SK-N-SH (cell line): ENCODE measurements at regions of chr15 and their contacts with region 1.

Region 1: GRCh38 chr15:98311566-98312188 is 336.7 kb upstream of the IGF1R start:
- DNase-seq: peak; percentile 57
- H3K4me3 ChIP-seq: no peak overlapping the region
- H3K27ac ChIP-seq: no peak overlapping the region
- H3K4me1 ChIP-seq: no peaks in the 10 kb centered on the region
- H3K27me3 ChIP-seq: peaks cover 5% of the 10 kb centered on the region; the same call in 1 of the 2 replicates
- CTCF ChIP-seq: peak; percentile 89
- EP300 ChIP-seq: no peak
- RAD21 ChIP-seq: peak; percentile 65

Region 2: GRCh38 chr15:98324341-98324970 is 12.8 kb after region 1 on chr15:
- CTCF ChIA-PET with region 1: interaction called, 13 read pairs
- POLR2A ChIA-PET with region 1: no interaction called
- DNase-seq: no peak
- H3K4me3 ChIP-seq: no peak overlapping the region
- H3K27ac ChIP-seq: no peak overlapping the region
- H3K4me1 ChIP-seq: no peaks in the 10 kb centered on the region
- H3K27me3 ChIP-seq: peaks cover 5% of the 10 kb centered on the region; the same call in 1 of the 2 replicates
- CTCF ChIP-seq: no peak
- EP300 ChIP-seq: no peak
- RAD21 ChIP-seq: no peak

Region 3: DNA sequence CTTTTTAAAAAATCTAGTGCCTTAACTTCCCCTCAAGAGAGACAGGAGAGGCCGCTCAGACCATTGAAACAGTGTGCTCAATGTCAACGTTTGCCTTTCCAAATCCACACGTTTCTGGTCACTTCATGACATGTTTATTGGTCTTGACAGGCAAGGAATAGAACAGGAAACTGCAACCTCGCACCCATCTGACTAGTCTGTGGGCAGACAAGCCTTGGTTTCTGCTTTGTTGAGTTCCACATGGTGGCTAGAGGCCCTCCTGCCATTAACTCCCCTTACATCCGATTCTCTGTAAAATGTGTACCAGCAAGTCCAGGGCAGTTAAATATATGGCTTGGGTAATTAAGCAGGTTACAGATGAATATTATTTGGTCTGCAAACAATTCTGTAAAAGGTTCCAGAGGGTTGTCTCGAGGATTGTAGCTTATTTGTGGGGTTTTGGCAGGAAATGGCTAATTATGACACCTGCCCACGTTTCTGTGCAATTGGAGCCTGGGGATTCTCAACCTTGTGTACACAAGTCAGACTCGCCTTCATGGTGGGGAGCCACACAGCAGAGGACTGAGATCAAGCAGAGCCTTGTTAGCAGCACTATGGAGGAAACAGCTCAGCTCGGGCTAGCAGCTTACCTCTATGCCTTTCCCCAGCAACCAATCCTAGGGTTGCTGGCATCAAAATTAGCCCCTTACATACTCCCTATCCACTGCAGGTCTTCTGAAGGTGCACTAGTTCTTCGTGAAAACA is 19.2 kb after region 1 on chr15:
- CTCF ChIA-PET with region 1: interaction called, 14 read pairs
- POLR2A ChIA-PET with region 1: no interaction called
- DNase-seq: no peak
- H3K4me3 ChIP-seq: no peak overlapping the region
- H3K27ac ChIP-seq: no peak overlapping the region
- H3K4me1 ChIP-seq: no peaks in the 10 kb centered on the region
- H3K27me3 ChIP-seq: peaks cover 17% of the 10 kb centered on the region; the same call in 1 of the 2 replicates
- CTCF ChIP-seq: no peak
- EP300 ChIP-seq: no peak
- RAD21 ChIP-seq: no peak

Region 4: DNA sequence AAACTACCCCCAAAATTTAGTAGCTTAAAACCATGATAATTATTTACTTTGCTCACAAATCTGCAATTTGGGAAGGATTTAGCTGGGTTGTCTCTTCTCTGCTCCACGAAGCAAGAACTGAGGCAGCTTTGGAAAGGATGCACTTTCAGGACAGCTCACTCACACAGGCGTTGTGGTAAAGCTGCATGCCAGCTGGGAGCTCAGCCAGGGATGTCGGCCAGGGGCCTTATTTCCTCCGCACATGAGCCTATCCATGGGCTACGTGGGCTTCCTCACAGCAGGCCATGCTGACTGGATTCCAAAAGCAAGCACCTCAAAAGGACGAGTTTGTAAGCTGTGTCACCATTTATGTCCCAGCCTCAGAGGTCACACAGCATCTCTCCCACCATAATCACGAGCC is 35.3 kb after region 1 on chr15:
- CTCF ChIA-PET with region 1: interaction called, 11 read pairs
- POLR2A ChIA-PET with region 1: no interaction called
- DNase-seq: no peak
- H3K4me3 ChIP-seq: no peak overlapping the region
- H3K27ac ChIP-seq: no peak overlapping the region
- H3K4me1 ChIP-seq: no peaks in the 10 kb centered on the region
- H3K27me3 ChIP-seq: no peaks in the 10 kb centered on the region; the same call in 1 of the 2 replicates
- CTCF ChIP-seq: no peak
- EP300 ChIP-seq: no peak
- RAD21 ChIP-seq: no peak

Region 5: DNA sequence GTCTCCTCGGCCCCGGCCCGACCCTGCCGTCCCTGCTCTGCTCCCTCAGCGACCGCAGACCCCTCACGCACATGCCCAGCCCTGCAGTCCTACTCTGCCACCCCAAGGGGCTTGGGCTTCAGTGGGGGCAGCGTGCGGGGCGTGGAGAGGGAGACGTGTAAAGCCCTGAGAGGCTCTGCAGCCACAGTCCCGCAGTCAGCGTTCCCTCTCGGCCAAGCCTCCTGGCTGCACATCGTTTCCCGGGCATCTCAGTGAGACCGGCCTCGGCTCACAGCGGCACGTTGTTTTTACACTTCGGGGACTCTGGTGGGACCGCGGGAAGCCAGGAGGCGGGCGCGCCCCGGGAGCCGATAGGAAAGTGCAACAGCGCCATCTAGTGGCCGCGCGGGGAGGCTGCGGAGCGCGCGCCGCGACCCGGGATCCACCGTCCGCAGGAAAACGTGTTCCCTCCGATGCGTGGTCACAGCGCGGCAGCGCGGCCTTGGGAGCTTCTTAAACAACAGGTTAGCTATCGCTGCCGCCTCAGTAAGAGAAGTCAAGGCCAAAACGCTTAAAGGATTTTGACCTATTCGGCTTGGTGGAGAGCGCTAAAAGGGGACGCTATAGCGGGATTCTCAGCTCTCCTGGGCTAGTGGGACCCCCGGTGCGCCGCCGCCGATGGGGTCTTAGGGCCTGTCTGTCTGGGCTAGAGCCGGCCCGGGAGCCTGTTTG is 109.9 kb after region 1 on chr15:
- CTCF ChIA-PET with region 1: interaction called, 82 read pairs
- POLR2A ChIA-PET with region 1: no interaction called
- DNase-seq: peak; percentile 92
- H3K4me3 ChIP-seq: peak overlapping the region; percentile 26 to 47; a peak in 3 of 4 replicates
- H3K27ac ChIP-seq: no peak overlapping the region
- H3K4me1 ChIP-seq: peaks cover 0 to 4% of the 10 kb centered on the region in 2 experiments; a peak in 1 of 4 replicates
- H3K27me3 ChIP-seq: peaks cover 83% of the 10 kb centered on the region
- CTCF ChIP-seq: peak; percentile 88
- EP300 ChIP-seq: no peak
- RAD21 ChIP-seq: peak; percentile 78

Region 6: DNA sequence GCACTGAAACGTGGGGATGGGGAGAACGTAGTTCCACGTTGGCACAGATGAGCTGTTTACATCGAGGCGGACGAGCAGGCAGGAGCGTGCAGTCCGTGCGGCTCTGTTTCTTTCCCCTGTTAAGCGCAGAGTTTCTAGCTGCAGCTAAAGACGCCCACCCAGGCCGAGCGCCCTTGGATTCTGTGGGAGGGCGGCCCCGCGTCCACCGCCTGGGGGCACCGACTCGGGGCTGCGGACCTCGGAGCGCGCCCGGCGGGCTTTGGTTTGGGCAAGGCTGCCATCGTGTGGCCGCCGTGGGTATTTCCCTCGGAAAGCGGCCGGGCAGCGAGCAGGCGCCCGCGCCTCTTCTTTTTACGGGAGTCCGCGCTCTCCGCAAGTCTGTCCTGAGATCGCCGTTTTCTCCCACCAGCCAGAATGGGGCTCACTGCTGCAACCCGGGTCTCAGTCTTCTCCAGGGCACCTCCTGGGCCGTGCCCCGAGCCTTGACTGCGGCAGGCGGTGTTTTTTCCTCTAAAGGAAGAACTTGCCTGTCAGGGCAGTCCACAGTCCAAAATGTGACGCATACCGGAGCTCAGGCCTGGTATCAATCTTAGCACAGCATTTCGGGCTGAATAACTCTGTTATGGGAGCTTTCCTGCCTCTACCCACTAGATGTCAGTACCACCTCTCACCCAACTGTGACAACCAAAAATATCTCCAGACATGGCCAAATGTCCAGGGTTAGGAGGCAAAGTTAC is 116.7 kb after region 1 on chr15:
- CTCF ChIA-PET with region 1: interaction called, 82 read pairs
- POLR2A ChIA-PET with region 1: no interaction called
- DNase-seq: peak; percentile 87
- H3K4me3 ChIP-seq: peak overlapping the region; percentile 31 to 67
- H3K27ac ChIP-seq: no peak overlapping the region
- H3K4me1 ChIP-seq: peaks cover 0 to 2% of the 10 kb centered on the region in 2 experiments; a peak in 1 of 4 replicates
- H3K27me3 ChIP-seq: peaks cover 38% of the 10 kb centered on the region
- CTCF ChIP-seq: peak; percentile 66
- EP300 ChIP-seq: no peak
- RAD21 ChIP-seq: peak; percentile 55